ENCODE measurements at regions of chr14 and their contacts with region 1.

Region 1: GRCh38 chr14:77760381-77761246 is at the start of gene SNW1:
- DNase-seq: peak; percentile 91 to 97
- ATAC-seq: peak; percentile 97 to 99 (median 98)
- H3K4me3 ChIP-seq: peak within 1 kb of the TSS; percentile 99
- H3K27ac ChIP-seq: peak within 1 kb of the TSS; percentile 96
- H3K4me1 ChIP-seq: peaks cover 25% of the 10 kb centered on the region
- H3K27me3 ChIP-seq: no peaks in the 10 kb centered on the region
- CTCF ChIP-seq: no peak
- total RNA-seq, gene SNW1: 50.4 to 95.0 (median 66.4) TPM

Region 2: DNA sequence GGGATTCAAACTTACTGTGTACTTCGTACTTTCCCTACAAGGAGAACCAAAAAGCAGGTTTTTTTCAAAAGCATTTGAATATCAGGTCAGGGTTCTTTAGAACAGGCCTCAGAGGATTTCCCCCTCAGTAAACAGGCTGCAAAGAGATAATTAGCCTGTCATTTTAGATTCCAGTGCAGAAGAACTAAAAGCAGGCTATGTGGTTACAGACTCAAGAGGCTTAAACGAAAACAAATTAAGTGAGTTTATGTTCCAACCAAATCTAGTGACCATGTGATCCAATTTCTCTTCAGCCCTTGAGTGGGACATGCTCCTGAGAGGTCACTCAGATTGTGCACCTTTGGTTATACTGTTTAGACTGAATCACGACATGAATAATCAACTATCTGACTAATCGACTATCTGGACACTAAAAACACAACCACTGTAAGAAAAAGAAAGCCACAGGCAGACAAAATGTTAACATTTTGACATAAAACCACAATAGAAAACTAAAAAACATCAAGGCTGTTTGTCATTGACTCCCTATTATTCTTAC is 388.2 kb before region 1 on chr14:
- intact Hi-C with region 1: no loop called
- DNase-seq: no peak
- ATAC-seq: no peak
- H3K4me3 ChIP-seq: no peak overlapping the region
- H3K27ac ChIP-seq: no peak overlapping the region
- H3K4me1 ChIP-seq: peaks cover 12% of the 10 kb centered on the region
- H3K27me3 ChIP-seq: no peaks in the 10 kb centered on the region
- CTCF ChIP-seq: no peak

Region 3: GRCh38 chr14:77707724-77708408 is 52.7 kb before region 1 on chr14 and contains the starts of genes ALKBH1 and SLIRP:
- intact Hi-C with region 1: loop called in 1 of 2 experiments (anchors 5 kb)
- DNase-seq: peak; percentile 86 to 91
- ATAC-seq: peak; percentile 97 to 99 (median 98)
- H3K4me3 ChIP-seq: peak within 1 kb of the TSS; percentile 98
- H3K27ac ChIP-seq: peak within 1 kb of the TSS; percentile 74
- H3K4me1 ChIP-seq: peaks cover 25% of the 10 kb centered on the region
- H3K27me3 ChIP-seq: no peaks in the 10 kb centered on the region
- CTCF ChIP-seq: no peak
- total RNA-seq, gene ALKBH1: 7.7 to 14.9 (median 10.4) TPM
- total RNA-seq, gene SLIRP: 129 to 185 (median 143) TPM

Region 4: DNA sequence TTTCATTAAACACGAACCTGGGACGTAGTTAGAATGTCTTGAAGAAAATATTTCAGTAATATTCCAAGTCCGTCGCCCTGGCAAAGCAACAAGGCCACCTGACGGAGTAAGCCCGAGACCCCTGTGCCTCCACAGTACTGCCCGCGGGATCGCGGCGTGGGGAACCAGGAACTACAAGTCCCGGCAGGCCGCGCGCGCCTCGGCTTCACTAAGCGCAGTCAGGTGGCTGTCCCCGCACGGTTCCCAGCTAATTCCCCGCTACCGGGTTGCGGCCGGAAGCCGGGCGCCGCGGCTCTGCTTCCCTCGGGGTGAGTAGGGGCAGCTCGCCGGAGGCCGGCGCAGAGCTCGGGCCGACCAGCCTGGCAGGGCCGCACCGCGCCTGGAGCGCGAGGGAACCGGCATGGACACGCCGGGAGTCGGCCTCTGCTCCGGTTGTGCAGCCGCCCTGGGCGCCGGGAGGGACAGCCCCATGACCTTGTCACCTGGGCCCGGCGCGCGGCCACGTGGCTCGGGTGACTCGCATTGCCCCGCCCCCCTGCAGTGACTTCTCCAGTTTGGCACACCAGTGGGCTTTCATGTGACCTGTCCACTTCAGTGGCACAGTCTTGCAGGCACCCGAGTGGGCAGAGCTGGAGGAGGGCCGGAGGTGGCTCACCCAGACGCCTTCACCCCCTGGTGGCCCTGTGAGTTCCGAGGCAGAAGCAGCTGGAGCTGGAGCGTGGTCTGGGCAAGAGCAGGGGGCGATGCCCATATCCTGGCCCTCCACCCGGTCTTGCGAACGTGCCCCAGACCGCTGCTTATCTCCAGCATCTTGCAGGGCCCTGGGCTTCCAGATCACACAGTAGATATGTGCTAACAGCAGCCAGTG is 39.5 kb after region 1 on chr14 and contains the start of gene ADCK1:
- intact Hi-C with region 1: loop called (anchors 1 to 2 kb)
- DNase-seq: peak; percentile 94 to 97
- ATAC-seq: peak; percentile 97 to 98 (median 98)
- H3K4me3 ChIP-seq: peak within 1 kb of the TSS; percentile 79
- H3K27ac ChIP-seq: peak within 1 kb of the TSS; percentile 97
- H3K4me1 ChIP-seq: peaks cover 5% of the 10 kb centered on the region
- H3K27me3 ChIP-seq: no peaks in the 10 kb centered on the region
- CTCF ChIP-seq: peak; percentile 42
- total RNA-seq, gene ADCK1: 3.8 to 6.6 (median 5.4) TPM

Region 5: GRCh38 chr14:77812028-77812427 is 51.4 kb after region 1 on chr14:
- intact Hi-C with region 1: no loop called
- DNase-seq: no peak
- ATAC-seq: no peak
- H3K4me3 ChIP-seq: no peak overlapping the region
- H3K27ac ChIP-seq: no peak overlapping the region
- H3K4me1 ChIP-seq: no peaks in the 10 kb centered on the region
- H3K27me3 ChIP-seq: no peaks in the 10 kb centered on the region
- CTCF ChIP-seq: no peak